ENCODE measurements at regions of chr15 and their contacts with region 1.

Region 1: DNA sequence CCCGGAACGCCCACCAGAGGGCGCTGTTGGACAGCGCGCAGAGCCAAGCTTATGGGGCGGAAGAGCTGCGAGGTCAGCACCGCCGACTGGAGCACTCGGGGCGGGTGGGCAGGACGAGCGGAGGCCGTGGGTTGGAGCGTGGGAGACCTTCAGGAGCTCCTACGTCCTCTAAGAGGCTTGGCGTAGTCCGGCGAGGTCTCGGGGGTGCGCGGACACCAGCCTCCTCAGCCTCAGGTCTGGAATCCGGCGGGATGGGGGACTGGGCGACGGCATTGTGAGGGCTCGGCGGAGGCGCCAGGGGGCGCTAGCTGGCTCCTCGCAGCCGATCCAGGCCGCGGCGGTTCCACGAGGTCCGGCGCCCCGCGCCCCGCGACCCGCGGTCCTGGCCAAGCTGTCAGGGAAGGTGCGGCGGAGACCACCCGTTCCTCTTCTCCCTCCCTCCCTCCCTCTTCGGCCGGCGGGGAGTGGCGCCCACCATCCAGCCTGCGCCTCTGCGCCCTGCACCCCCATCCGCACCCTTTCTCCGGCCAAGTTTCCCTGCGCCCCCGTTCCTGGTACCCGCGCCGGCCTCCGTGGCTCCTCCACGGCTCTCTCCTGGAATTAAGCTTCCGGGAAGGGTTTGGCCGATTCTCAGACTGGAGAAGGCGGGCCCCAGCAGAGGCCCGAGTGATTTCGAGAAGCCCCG is 24.3 kb upstream of the POLG start:
- DNase-seq: peak; percentile 64
- H3K4me3 ChIP-seq: peak overlapping the region in 2 of 3 experiments; percentile 47 to 51
- H3K27ac ChIP-seq: no peak overlapping the region
- H3K4me1 ChIP-seq: peaks cover 8% of the 10 kb centered on the region
- H3K27me3 ChIP-seq: peaks cover 48% of the 10 kb centered on the region
- CTCF ChIP-seq: peak; percentile 19 to 77

Region 2: GRCh38 chr15:89399238-89400120 is 40.6 kb after region 1 on chr15:
- CTCF ChIA-PET with region 1: interaction called, 3 read pairs
- dilution Hi-C with region 1: no loop called
- in situ Hi-C with region 1: no loop called
- intact Hi-C with region 1: loop called (anchors 1 kb)
- DNase-seq: no peak
- H3K4me3 ChIP-seq: peak overlapping the region in 2 of 3 experiments; percentile 21 to 31
- H3K27ac ChIP-seq: no peak overlapping the region
- H3K4me1 ChIP-seq: peaks cover 21% of the 10 kb centered on the region
- H3K27me3 ChIP-seq: peaks cover 22% of the 10 kb centered on the region
- CTCF ChIP-seq: peak; percentile 19 to 57

Region 3: GRCh38 chr15:89416141-89416853 is 57.4 kb after region 1 on chr15:
- CTCF ChIA-PET with region 1: interaction called, 3 read pairs
- dilution Hi-C with region 1: no loop called
- in situ Hi-C with region 1: loop called in 1 of 2 experiments (anchors 5 kb)
- intact Hi-C with region 1: no loop called
- DNase-seq: peak; percentile 56
- H3K4me3 ChIP-seq: no peak overlapping the region
- H3K27ac ChIP-seq: no peak overlapping the region
- H3K4me1 ChIP-seq: peaks cover 16% of the 10 kb centered on the region
- H3K27me3 ChIP-seq: peaks cover 8% of the 10 kb centered on the region
- CTCF ChIP-seq: peak; percentile 90 to 96

Region 4: GRCh38 chr15:89436570-89437316 is 77.8 kb after region 1 on chr15:
- CTCF ChIA-PET with region 1: no interaction called
- dilution Hi-C with region 1: loop called (anchors 5 kb)
- in situ Hi-C with region 1: loop called in 1 of 2 experiments (anchors 5 kb)
- intact Hi-C with region 1: no loop called
- DNase-seq: no peak
- H3K4me3 ChIP-seq: no peak overlapping the region
- H3K27ac ChIP-seq: no peak overlapping the region
- H3K4me1 ChIP-seq: no peaks in the 10 kb centered on the region
- H3K27me3 ChIP-seq: peaks cover 6% of the 10 kb centered on the region
- CTCF ChIP-seq: no peak

Region 5: DNA sequence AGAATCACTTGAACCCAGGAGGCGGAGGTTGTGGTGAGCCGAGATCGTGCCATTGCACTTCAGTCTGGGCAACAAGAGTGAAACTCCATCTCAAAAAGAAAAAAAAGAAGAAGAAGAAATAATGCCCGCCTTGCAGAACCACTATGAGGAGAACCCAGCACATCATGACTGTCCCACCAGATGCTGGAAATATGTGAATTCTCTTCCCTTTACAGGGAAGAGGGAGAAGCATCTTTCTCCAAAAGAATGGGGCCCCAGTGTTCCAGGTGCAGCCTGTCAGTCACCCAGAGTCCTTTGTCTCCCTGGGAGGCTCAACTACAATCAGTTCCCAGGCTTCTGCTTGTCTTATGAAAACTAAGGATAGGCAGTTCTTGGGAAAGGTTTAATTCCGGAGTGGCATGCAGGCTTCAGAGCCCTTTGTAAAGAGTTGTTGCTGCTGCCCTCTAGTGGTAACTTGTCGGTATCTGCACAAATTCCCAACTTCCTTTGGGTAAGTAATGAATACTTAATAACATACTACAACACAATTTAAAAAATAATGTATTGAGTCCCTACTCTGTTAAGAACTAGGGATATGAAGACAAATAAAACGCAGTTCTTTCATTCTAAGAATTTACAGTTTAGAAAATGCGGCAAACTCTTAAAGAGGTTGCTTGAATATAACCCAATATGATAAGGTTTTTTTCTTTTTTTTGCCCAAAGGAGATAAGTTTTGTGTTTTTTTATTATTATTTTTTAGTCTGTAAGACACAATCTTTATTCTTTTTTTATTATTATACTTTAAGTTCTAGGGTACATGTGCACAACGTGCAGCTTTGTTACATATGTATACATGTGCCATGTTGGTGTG is 197.7 kb after region 1 on chr15:
- CTCF ChIA-PET with region 1: interaction called, 4 read pairs
- dilution Hi-C with region 1: no loop called
- in situ Hi-C with region 1: no loop called
- intact Hi-C with region 1: loop called (anchors 5 kb)
- DNase-seq: peak; percentile 63
- H3K4me3 ChIP-seq: no peak overlapping the region
- H3K27ac ChIP-seq: no peak overlapping the region
- H3K4me1 ChIP-seq: no peaks in the 10 kb centered on the region
- H3K27me3 ChIP-seq: no peaks in the 10 kb centered on the region
- CTCF ChIP-seq: peak; percentile 80 to 82